ENCODE measurements at regions of chr3 and their contacts with region 1.

Region 1: DNA sequence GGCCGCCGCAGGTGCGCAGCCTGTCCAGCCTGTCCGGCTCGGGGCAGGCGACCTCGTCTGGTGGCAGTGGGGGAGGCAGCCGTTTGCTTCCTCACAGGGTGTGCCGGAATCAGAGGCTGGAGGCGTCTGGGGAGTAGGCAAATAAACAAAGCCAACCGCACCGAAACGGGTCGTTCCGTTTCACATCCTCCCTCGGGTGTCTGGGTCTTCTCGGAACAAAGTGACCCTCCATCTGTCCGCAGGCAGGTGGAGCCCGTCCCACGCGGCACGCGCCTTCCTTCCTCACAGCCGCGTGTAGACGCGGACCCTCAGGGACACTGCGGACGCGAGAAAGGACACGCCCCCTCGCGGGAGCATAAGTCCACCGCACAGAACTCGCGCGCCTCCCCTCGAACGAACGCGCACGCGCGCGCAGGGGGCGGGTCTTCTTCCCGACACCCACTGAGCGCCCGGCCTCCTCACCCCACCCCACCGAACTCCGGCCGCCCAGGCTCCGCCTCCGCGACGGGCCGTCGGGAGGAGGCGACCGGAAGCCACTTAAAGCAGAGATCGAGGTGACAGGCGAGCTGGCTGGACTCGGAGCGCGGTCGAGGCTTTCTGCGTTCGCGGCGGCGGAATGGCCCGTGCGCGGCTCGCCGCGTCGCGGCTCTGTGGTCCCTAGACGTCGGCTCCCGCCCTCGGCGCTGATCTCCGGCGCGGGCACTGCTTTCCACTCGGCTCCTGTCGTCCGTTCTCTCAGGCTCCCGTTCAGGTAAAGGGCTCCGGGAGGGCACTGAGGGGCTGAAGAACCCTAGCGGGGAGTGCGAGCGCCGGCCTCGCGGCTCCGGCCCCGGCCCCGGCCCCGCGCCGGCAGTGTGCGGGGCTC is at the start of gene TIPARP:
- DNase-seq: peak; percentile 99
- H3K4me3 Mint-ChIP-seq: peak within 1 kb of the TSS; percentile 86
- H3K27ac Mint-ChIP-seq: peak within 1 kb of the TSS; percentile 96
- H3K4me1 Mint-ChIP-seq: peaks cover 47% of the 10 kb centered on the region
- H3K27me3 Mint-ChIP-seq: no peaks in the 10 kb centered on the region
- total RNA-seq, gene TIPARP: 64.7 to 73.8 TPM

Region 2: DNA sequence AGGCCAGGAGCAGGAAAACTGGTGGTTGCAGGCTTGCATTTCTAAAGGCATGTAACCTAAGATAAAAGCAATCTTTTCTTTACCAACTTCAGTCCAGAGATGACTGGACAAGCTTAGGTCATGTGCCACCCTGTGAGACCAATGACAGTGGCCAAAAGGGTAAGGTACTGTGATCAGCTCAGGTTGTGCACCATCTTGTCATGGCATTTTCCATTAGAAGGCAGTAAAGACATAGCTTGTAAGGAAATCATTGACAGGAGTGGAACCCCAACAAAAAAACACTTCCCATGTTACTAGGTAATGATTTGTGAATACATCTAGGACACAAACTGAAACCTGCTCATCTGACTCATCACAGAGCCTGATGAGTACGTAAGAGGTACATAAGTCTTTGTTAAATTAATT is 154.5 kb before region 1 on chr3:
- CTCF ChIA-PET with region 1: interaction called, 3 read pairs
- POLR2A ChIA-PET with region 1: interaction called, 10 read pairs
- DNase-seq: no peak
- H3K4me3 Mint-ChIP-seq: no peak overlapping the region
- H3K27ac Mint-ChIP-seq: no peak overlapping the region
- H3K4me1 Mint-ChIP-seq: peaks cover 44% of the 10 kb centered on the region
- H3K27me3 Mint-ChIP-seq: peaks cover 14% of the 10 kb centered on the region

Region 3: DNA sequence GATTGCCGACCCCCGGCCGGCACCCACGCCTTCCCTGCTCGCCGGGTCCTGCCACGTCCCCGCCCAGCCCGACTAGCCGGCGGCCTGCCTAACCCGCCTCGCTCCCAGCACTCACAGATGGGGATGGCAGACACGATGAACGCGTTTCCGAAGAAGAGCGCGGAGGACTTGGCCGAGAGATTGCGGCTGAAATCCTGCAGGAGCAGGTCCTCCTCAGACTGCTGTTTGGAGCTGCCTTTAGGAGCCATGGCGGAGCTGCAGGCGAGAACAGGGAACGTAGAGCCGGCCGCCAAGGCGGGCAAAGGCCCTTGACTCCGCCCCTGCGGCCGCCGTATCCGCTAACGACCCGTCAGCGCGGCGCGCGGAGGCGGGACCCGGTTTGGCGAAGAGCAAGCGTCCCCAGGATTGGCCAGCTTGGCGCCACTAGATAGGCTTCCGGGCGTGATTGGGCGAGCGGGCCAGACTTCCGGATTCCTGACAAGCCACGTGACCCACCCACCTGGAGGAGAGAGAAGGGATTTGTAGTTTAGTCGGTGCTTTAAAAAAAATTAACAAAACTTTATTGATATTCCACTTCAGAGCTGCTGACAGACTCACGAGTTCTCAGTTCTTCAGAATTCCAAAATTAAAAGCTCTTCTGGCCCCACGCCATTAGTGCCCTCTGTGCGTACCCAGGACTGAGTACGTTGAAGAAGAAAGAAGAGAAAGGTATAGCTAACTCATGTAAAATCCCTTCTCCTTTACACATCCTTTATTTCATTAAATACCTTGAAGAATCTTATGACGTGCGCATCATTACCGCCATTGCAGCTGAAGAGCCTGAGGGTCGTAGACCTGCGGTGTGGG is 119.2 kb before region 1 on chr3 and contains the start of gene SSR3:
- CTCF ChIA-PET with region 1: interaction called, 39 read pairs
- POLR2A ChIA-PET with region 1: interaction called, 128 read pairs
- DNase-seq: peak; percentile 99
- H3K4me3 Mint-ChIP-seq: peak within 1 kb of the TSS; percentile 96
- H3K27ac Mint-ChIP-seq: peak within 1 kb of the TSS; percentile 84
- H3K4me1 Mint-ChIP-seq: peaks cover 48% of the 10 kb centered on the region
- H3K27me3 Mint-ChIP-seq: no peaks in the 10 kb centered on the region
- total RNA-seq, gene SSR3: 167 to 174 TPM

Region 4: DNA sequence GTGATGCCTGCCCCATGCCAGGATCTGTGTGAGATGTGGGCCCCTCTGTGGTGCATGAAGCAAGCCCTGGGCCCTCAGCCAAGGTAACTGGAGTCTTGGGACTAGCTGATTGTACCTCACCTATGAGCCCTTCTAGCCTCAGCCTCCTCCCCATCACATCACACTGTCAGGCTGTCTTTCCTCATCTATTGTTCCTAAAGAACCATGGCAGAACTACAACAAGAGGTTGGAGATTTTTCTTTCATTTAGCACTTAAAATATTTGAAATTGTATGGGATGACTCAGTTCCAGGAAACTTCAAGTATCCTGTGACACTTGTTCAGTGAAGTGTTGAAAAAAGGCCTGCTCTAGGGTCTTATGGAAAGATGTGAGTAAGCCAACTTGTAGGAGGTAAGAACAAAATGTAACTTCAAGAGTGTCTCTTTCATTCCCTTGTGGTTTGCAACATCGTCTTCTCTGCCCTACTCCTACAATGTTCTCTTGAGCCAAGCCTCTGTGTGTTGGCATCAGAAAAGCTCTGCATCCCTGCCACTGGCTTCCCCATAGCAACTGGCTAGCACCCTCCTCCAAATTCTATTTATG is 58.6 kb before region 1 on chr3:
- CTCF ChIA-PET with region 1: no interaction called
- POLR2A ChIA-PET with region 1: no interaction called
- DNase-seq: no peak
- H3K4me3 Mint-ChIP-seq: no peak overlapping the region
- H3K27ac Mint-ChIP-seq: no peak overlapping the region
- H3K4me1 Mint-ChIP-seq: peaks cover 8% of the 10 kb centered on the region
- H3K27me3 Mint-ChIP-seq: no peaks in the 10 kb centered on the region

Region 5: DNA sequence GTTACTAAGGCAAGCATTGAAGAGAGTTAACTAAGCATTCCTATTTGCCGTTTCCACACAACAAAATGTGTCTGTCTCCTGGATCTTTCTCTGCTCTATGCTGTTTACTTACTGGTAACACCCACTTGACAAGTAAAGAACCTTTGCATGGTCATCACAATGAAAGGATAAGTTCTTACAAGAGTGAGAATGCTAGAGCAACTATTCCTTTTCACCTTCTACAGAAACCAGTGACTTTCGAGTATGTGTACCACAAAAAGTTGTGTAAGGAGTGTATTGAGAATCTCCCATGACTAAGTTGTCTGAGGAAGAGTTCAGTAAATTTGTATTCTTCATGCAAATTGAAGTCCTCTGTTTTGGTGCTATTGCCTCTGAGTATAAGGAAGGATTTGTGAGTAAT is 10.9 kb after region 1 on chr3:
- CTCF ChIA-PET with region 1: interaction called, 8 read pairs
- POLR2A ChIA-PET with region 1: interaction called, 68 read pairs
- DNase-seq: no peak
- H3K4me3 Mint-ChIP-seq: peak overlapping the region; percentile 12
- H3K27ac Mint-ChIP-seq: peak overlapping the region; percentile 52
- H3K4me1 Mint-ChIP-seq: peaks cover 89% of the 10 kb centered on the region
- H3K27me3 Mint-ChIP-seq: no peaks in the 10 kb centered on the region

Region 6: GRCh38 chr3:156728267-156728985 is 54.1 kb after region 1 on chr3:
- CTCF ChIA-PET with region 1: no interaction called
- POLR2A ChIA-PET with region 1: no interaction called
- DNase-seq: no peak
- H3K4me3 Mint-ChIP-seq: no peak overlapping the region
- H3K27ac Mint-ChIP-seq: no peak overlapping the region
- H3K4me1 Mint-ChIP-seq: peaks cover 14% of the 10 kb centered on the region
- H3K27me3 Mint-ChIP-seq: no peaks in the 10 kb centered on the region

Region 7: DNA sequence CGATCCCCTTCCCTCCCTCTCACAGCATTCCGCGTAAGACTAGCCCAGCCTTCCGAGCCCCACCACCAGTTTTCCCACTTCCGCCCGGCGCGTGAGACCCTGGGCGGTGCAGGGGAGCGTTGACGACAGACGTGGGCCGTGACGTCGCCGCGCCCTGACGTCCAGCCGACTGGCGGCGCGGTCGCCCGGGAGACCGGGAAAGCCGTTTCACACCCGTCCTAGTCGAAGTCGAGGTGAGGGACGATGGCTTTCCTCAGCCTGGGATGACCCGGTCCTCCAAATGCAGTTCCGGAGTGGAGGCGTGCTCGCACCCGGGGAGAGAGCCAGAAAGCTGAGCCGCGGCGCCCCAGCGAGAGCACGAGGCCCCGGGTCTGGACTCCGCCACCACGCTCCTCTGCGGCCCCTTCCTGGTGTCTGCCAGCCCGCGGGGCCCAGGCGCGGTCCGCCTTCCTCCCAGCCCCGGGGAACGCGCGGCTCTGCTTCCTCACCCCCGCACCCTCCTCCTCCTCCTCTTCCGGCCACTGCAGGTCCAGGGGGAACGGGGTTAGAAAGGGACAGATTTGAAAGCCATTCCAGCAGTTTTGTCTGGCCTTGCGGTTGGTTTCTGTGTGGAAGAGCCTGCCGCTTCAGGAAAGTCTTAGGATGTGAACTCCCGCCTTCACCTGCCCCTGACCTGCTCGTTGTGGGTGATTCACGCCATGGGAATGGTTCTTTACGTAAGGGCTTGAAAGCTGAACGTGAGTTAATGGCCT is 152.0 kb after region 1 on chr3 and contains the start of gene LEKR1:
- CTCF ChIA-PET with region 1: no interaction called
- POLR2A ChIA-PET with region 1: no interaction called
- DNase-seq: peak; percentile 71
- H3K4me3 Mint-ChIP-seq: peak within 1 kb of the TSS; percentile 80
- H3K27ac Mint-ChIP-seq: peak within 1 kb of the TSS; percentile 86
- H3K4me1 Mint-ChIP-seq: peaks cover 38% of the 10 kb centered on the region
- H3K27me3 Mint-ChIP-seq: no peaks in the 10 kb centered on the region
- total RNA-seq, gene LEKR1: 1.4 to 1.6 TPM

Region 8: DNA sequence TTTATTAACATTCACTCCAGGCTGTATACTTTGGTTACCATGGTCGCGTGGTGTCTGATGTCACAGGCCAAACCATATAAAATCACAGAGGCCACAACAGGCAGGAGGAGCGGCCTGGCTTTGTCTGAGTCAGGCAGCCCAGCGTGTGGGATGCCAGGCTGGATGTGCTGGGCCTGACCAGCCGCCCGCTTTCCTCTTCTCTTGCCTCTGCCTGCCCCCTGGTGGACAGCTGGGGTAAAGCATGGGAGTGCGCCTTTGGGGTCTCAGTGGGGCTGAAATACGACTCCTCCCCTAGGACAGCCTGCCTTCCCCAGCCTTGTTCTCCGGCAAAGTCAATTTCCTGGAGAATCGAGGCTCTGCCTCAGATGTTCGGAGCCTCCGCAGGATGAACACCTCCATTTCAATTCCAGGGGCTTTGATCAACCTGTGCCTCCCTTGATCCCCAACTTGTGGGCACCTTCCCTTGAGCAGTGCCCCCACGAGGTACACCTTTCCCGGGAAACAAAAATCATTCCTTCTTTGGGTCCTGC is 407.5 kb after region 1 on chr3:
- CTCF ChIA-PET with region 1: interaction called, 19 read pairs
- POLR2A ChIA-PET with region 1: interaction called, 71 read pairs
- DNase-seq: peak; percentile 85
- H3K4me3 Mint-ChIP-seq: no peak overlapping the region
- H3K27ac Mint-ChIP-seq: no peak overlapping the region
- H3K4me1 Mint-ChIP-seq: peaks cover 46% of the 10 kb centered on the region
- H3K27me3 Mint-ChIP-seq: no peaks in the 10 kb centered on the region

Region 9: GRCh38 chr3:157159762-157160657 is 485.7 kb after region 1 on chr3 and contains the start of gene CCNL1:
- CTCF ChIA-PET with region 1: interaction called, 13 read pairs
- POLR2A ChIA-PET with region 1: interaction called, 74 read pairs
- DNase-seq: peak; percentile 96
- H3K4me3 Mint-ChIP-seq: peak within 1 kb of the TSS; percentile 100
- H3K27ac Mint-ChIP-seq: peak within 1 kb of the TSS; percentile 100
- H3K4me1 Mint-ChIP-seq: peaks cover 57% of the 10 kb centered on the region
- H3K27me3 Mint-ChIP-seq: no peaks in the 10 kb centered on the region
- total RNA-seq, gene CCNL1: 223 to 249 TPM

Measured in activated CD4-positive, alpha-beta memory T cell treated with anti-CD3 and anti-CD28 coated beads, Interleukin-2, amount 10 ng/mL, durations not matched to agents 7 days and 5 days (primary cell).